ENCODE measurements at regions of chrX and their contacts with region 1.

Region 1: GRCh38 chrX:104318330-104319009 is 63.7 kb upstream of the ESX1 start:
- DNase-seq: peak; percentile 96
- ATAC-seq: peak; percentile 93
- H3K4me3 ChIP-seq: peak overlapping the region; percentile 11; the same call in 1 of the 2 replicates
- H3K27ac ChIP-seq: peak overlapping the region; percentile 97
- H3K4me1 ChIP-seq: peaks cover 53% of the 10 kb centered on the region
- H3K27me3 ChIP-seq: no peaks in the 10 kb centered on the region
- CTCF ChIP-seq: no peak

Region 2: DNA sequence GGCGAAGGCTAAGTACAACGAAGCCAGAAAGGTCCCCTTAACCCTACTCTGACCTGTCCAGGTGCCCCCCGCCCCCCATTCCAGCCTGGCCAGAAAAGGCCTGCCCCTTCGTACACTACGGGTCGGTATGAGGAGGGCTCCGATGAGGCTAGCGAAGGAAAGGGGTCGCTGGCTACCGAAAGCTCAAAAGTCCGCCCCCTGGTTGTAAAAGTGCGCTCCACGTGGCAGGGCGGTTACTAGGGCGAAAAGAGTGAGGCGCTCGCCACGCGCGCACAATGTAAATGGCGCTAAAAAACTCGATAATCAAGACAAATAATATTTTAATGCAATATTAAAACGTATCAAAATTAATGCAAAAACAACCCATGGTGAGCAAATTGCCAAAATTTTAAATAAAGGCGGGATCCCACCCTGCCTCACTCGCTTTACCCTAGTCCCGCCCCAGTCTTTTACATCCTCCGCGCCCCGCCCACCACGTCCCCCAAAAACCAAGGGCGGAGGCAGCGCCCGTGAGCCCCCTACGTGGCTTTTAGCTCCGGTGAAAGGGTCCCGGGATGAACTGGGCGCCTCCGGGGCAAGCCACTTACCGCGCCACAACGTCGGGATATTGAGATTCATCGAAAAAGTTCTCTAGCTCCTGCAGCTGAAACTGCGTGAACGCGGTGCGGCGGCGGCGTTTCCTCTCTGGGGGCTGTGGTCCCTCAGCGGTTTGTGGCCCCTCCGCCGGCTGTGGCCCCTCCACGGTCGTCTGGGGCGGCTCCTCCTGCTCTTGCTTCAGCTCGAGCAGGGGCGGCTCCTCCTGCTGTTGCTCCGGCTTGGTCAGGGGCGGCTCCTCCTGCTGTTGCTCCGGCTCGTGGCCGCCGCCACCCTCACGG is 64.7 kb before region 1 on chrX:
- CTCF ChIA-PET with region 1: no interaction called
- POLR2A ChIA-PET with region 1: no interaction called
- intact Hi-C with region 1: no loop called
- DNase-seq: no peak
- ATAC-seq: no peak
- H3K4me3 ChIP-seq: no peak overlapping the region
- H3K27ac ChIP-seq: no peak overlapping the region
- H3K4me1 ChIP-seq: peaks cover 13% of the 10 kb centered on the region
- H3K27me3 ChIP-seq: no peaks in the 10 kb centered on the region
- CTCF ChIP-seq: no peak

Region 3: DNA sequence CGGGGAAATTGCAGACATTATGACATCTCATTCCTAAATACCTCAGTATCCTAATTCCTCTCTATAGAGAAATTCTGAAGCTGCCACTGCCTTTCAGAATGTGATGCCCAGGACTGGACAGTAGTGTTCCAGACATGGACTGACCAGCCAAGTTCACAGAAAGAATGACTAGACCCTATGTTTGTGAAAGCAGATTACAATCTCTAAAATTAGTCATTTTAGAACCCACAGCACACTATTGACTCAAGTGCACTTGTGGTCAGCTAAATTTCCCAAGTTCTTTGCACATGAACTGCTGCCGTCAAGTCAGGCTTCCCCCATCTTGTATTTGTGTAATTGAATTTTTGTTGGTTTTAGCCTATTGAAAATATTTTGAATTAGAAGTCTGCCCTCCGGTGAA is 17.3 kb after region 1 on chrX:
- CTCF ChIA-PET with region 1: interaction called, 3 read pairs
- POLR2A ChIA-PET with region 1: no interaction called
- intact Hi-C with region 1: loop called (anchors 1 kb)
- DNase-seq: peak; percentile 87
- ATAC-seq: peak; percentile 94
- H3K4me3 ChIP-seq: no peak overlapping the region
- H3K27ac ChIP-seq: peak overlapping the region; percentile 87
- H3K4me1 ChIP-seq: peaks cover 51% of the 10 kb centered on the region
- H3K27me3 ChIP-seq: no peaks in the 10 kb centered on the region
- CTCF ChIP-seq: no peak

Region 4: DNA sequence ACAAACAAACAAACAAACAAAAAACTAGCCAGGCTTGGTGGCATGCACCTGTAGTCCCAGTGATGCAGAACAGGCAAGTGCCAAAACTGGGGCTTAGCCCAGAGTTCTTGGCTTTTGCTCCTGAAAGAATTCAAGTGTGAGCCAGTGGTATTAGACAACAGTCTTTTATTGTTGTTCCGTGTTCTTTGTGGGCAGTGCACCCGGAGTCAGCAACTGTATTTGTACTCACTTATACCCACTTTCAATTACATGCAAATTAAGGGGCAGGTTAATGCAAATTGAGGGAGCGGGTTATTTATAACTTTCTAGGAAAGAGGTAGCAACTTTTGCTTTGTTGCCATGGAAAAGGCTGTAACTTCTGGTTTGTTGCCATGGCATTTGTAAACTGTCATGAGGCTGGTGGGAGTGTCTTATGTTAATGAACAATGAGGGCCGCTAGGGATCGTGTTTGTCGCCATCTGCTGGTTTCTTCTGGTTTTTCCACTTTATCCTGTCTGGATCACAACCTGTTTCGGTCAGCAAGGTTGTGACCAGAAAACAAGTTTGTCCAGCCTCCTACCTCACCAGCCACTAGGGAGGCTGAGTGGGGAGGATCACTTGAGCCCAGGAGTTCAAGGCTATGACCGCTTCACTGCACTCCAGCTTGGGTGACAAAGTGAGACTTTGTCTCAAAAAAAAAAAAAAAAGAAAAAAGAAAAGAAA is 25.1 kb after region 1 on chrX:
- CTCF ChIA-PET with region 1: no interaction called
- POLR2A ChIA-PET with region 1: no interaction called
- intact Hi-C with region 1: loop called (anchors 1 kb)
- DNase-seq: peak; percentile 94
- ATAC-seq: peak; percentile 93
- H3K4me3 ChIP-seq: no peak overlapping the region
- H3K27ac ChIP-seq: no peak overlapping the region
- H3K4me1 ChIP-seq: peaks cover 17% of the 10 kb centered on the region; the same call in 1 of the 2 replicates
- H3K27me3 ChIP-seq: no peaks in the 10 kb centered on the region
- CTCF ChIP-seq: peak; percentile 74

Region 5: GRCh38 chrX:104359164-104359563 is 40.7 kb after region 1 on chrX:
- CTCF ChIA-PET with region 1: no interaction called
- POLR2A ChIA-PET with region 1: no interaction called
- intact Hi-C with region 1: no loop called
- DNase-seq: no peak
- ATAC-seq: no peak
- H3K4me3 ChIP-seq: no peak overlapping the region
- H3K27ac ChIP-seq: no peak overlapping the region
- H3K4me1 ChIP-seq: no peaks in the 10 kb centered on the region
- H3K27me3 ChIP-seq: no peaks in the 10 kb centered on the region
- CTCF ChIP-seq: no peak

Region 6: DNA sequence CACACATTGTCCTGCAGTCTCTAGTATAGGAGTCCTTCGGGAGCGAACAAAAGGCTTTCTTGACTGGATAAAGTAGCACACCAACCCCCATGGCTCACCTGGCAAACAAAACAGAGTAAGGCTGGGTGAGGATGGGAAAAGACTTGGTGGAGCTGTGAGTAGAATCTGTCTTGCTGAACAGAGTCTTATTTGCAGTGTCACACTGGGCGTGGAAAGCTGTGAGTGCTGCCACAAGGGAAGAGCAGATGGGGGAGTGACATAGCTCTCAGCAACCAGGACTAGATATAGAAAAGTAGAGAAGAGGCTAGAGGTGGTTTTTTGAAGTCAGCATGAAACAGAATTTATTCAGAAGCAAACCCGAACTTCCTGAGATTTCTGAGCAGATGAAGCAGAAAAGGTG is 73.4 kb after region 1 on chrX:
- CTCF ChIA-PET with region 1: no interaction called
- POLR2A ChIA-PET with region 1: interaction called, 29 read pairs
- intact Hi-C with region 1: no loop called
- DNase-seq: no peak
- ATAC-seq: no peak
- H3K4me3 ChIP-seq: no peak overlapping the region
- H3K27ac ChIP-seq: no peak overlapping the region
- H3K4me1 ChIP-seq: no peaks in the 10 kb centered on the region
- H3K27me3 ChIP-seq: no peaks in the 10 kb centered on the region
- CTCF ChIP-seq: no peak

Region 7: DNA sequence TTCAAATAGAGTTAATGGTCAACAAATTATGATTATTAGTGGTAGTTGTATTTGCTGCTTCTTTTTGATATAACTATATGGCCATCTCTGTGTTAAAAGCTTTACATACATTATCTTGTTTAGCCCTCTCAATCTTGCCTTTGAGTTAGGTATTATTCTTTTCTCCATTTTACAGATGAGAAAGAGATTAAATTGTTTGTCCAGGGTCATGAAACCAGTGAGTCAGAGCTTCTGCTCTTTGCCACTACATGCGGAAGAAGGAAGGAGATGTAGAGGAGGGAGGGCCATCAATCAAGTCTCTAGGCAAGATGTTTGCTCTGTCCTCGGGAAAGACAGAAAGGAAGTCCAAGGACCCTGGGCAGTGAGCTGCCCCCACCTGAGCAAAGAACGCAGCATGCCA is 113.8 kb after region 1 on chrX:
- CTCF ChIA-PET with region 1: no interaction called
- POLR2A ChIA-PET with region 1: no interaction called
- intact Hi-C with region 1: loop called (anchors 1 kb)
- DNase-seq: peak; percentile 70
- ATAC-seq: peak; percentile 85
- H3K4me3 ChIP-seq: no peak overlapping the region
- H3K27ac ChIP-seq: peak overlapping the region; percentile 73
- H3K4me1 ChIP-seq: peaks cover 32% of the 10 kb centered on the region
- H3K27me3 ChIP-seq: no peaks in the 10 kb centered on the region
- CTCF ChIP-seq: no peak